Thyroid gland (tissue), 4 donors: ENCODE measurements at regions of chr3 and their contacts with region 1.

Region 1: DNA sequence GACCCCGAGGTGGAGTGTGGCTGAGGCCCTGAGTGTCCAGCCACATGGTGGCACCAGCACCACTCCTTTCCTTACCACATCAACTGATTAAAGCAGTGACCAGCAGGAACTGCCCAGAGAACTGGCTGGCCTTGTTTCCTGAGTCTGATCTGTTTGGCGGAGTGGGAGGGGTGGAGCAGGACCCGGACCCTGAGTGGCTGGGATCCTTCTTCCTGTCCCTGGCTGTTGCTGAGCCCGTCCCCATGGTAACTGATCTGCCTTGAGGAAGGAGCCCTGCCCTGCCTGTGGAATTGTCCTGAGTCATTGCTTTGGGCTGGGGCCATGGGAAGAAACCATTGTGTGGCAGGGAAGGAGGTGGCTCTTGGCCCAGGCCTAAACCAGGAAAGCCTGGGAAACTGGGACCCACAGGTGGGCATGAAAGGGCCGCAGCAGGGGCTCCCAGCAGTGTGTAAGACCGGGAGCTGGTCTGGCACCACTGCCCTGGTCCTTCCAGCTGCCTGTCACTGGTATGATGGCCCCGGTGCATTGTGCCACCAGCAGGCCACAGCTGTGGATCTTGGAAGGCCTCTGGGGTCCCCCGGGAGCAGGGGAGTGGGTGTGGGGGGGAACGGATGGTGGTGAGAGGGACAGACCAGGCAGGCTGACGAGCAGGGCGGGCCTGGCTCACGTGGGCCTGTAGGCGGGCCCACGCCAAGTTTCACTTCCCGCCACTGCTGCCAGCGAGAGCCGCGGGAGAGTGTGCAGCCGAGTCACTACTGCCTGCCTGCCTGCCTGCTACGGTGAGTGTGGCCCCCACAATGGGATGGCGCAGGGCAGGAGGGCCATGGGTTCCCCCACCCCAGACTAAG is 19.2 kb downstream of the ATRIP start:
- DNase-seq: peak; percentile 99 to 100
- H3K4me3 ChIP-seq: peak overlapping the region in 1 of 3 donors; percentile 28
- H3K27ac ChIP-seq: peak overlapping the region; percentile 99 to 100 (median 100)
- H3K4me1 ChIP-seq: peaks cover 20 to 51% of the 10 kb centered on the region in 2 donors
- H3K27me3 ChIP-seq: no peaks in the 10 kb centered on the region
- CTCF ChIP-seq: peak in 5 of 6 experiments; percentile 49 to 88 (median 86)
- POLR2A ChIP-seq: peak in 1 of 2 donors; percentile 62

Region 2: DNA sequence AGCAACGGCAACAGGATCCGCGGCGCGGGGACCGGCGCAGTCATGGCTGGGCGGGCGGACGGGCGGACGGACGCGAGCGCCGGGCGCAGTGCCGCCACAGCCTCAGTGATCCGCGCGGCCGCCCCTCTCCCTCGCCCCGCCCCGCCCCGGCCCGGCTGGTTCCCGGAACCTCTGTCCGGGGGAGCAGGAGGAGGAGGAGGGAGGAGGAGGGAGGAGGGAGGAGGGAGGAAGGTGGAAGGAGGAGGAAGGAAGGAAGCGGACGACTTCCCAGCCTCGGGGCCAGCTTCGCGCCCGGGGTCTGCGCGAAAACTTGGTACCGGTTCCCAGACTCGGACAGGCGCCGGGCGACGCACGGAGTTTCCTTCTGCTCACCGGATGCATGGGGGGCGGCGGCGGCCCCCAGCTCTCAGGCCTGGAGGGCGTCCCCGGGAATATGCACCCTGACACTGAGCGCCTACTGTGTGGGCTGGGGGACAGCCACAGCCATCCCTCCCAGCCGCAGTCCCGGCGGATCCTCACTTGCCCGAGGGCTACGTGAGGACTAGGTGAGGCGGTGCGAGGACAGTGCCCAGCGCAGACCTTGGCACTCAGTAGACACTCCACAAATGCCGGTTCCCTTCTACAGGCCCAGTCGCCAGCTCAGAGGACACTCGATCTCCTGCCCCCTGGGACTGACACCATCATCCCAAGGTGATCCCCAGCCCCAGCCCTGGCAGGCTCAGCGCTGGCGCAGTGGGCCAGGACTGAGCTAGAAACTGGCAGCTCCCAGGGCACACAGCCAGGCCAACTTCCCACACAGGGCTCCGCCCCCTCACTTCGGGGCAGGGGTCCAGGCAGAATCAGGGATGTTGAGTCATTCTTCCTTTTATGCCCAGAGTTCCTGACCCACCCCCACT is 38.5 kb after region 1 on chr3 and contains the start of gene SHISA5:
- intact Hi-C with region 1: loop called (anchors 5 kb)
- DNase-seq: peak; percentile 82
- H3K4me3 ChIP-seq: peak within 1 kb of the TSS; percentile 54 to 75 (median 54)
- H3K27ac ChIP-seq: peak within 1 kb of the TSS; percentile 93 to 95 (median 94)
- H3K4me1 ChIP-seq: peaks cover 16 to 48% of the 10 kb centered on the region in 2 donors
- H3K27me3 ChIP-seq: no peaks in the 10 kb centered on the region
- CTCF ChIP-seq: no peak
- POLR2A ChIP-seq: peak in 1 of 2 donors; percentile 63
- total RNA-seq, gene SHISA5: 100.0 to 120 (median 109) TPM

Region 3: DNA sequence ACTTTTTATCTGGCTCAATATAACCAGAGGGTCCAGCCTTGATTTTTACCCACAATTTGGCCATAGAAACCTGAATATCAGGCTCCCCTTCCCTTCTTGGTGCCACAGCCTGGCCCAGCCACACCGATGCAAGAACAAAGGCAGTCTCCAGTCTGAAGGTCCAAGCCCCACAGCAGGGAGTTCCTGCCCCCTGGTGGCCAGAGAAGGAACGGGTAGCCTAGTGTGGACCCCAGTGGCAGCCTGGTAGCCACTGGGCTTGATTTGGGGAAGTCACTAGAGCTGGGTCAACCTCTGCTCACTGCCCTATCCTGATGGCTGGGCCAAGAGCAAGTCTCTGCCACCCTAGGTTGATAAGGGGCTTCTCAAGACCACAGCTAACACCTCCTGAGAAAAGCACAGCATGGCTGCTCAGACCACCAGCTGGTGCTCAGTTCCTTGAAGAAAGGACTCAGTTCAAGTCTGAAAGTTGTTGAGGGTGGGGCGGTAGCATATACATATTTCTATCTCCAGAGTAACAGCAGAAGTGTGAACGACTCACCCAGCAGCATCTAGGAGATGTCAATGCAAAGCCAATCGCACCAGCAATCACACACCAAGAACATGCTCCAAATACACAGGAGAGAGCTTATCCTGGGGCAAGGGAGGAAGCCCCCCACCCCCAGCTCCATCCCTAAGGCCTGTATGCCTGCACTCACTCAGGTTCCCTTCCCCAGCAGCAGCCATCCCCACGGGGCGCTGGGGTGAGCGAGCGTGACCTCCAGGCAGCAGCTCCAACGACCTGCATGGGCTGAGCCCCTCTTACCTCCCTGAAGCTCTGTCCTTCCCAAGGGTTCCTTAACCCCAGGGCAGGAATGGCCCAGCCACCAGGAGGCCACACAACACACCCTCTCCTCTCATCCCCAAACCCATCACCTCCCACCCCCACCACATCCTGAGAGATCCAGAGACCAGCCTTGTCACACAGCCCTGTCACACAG is 83.3 kb after region 1 on chr3:
- intact Hi-C with region 1: loop called (anchors 5 kb)
- DNase-seq: peak; percentile 81 to 85
- H3K4me3 ChIP-seq: no peak overlapping the region
- H3K27ac ChIP-seq: no peak overlapping the region
- H3K4me1 ChIP-seq: no peaks in the 10 kb centered on the region
- H3K27me3 ChIP-seq: no peaks in the 10 kb centered on the region
- CTCF ChIP-seq: peak; percentile 84 to 93 (median 88)
- POLR2A ChIP-seq: no peak